ENCODE measurements at regions of chr12 and their contacts with region 1.

Region 1: GRCh38 chr12:103930034-103930786 is at the start of gene HSP90B1:
- DNase-seq: peak; percentile 97
- H3K4me3 ChIP-seq: peak within 1 kb of the TSS; percentile 95
- H3K27ac ChIP-seq: peak within 1 kb of the TSS; percentile 86 to 91
- H3K4me1 ChIP-seq: peaks cover 15 to 22% of the 10 kb centered on the region in 2 experiments
- H3K27me3 ChIP-seq: no peaks in the 10 kb centered on the region
- CTCF ChIP-seq: no peak
- EP300 ChIP-seq: peak in 1 of 2 experiments; percentile 8; a peak in 1 of 4 replicates
- RAD21 ChIP-seq: no peak
- polyA plus RNA-seq, gene HSP90B1: 420 and 482 TPM in 2 replicates

Region 2: DNA sequence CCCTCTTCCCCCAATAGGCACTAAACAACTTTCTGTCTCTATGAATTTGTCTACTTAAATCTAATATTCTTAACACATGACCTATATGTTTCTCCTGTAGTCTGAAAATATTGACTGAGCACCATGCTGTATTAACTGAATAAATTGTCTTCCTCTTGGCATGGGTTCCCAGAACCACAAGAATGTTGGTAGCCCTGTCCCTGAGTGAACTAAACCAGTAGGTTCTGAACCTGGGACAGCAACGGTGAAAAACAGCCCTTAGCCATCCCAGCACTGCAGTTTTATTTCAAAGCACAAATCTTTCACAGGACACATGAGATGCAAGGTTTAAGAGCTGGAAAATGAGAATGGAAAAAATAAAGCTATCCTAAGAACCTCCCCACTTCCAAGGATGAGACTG is 20.4 kb before region 1 on chr12:
- CTCF ChIA-PET with region 1: no interaction called
- POLR2A ChIA-PET with region 1: interaction called, 10 read pairs
- DNase-seq: no peak
- H3K4me3 ChIP-seq: no peak overlapping the region
- H3K27ac ChIP-seq: peak overlapping the region in 1 of 2 experiments; percentile 47; a peak in 1 of 4 replicates
- H3K4me1 ChIP-seq: no peaks in the 10 kb centered on the region; a peak in 2 of 4 replicates
- H3K27me3 ChIP-seq: no peaks in the 10 kb centered on the region
- CTCF ChIP-seq: no peak
- EP300 ChIP-seq: no peak
- RAD21 ChIP-seq: no peak

Region 3: GRCh38 chr12:103956516-103957027 is 26.4 kb after region 1 on chr12:
- CTCF ChIA-PET with region 1: no interaction called
- POLR2A ChIA-PET with region 1: interaction called, 16 read pairs
- DNase-seq: no peak
- H3K4me3 ChIP-seq: peak overlapping the region; percentile 78 to 87
- H3K27ac ChIP-seq: peak overlapping the region; percentile 94 to 98
- H3K4me1 ChIP-seq: peaks cover 8 to 13% of the 10 kb centered on the region in 2 experiments; a peak in 2 of 4 replicates
- H3K27me3 ChIP-seq: no peaks in the 10 kb centered on the region
- CTCF ChIP-seq: no peak
- EP300 ChIP-seq: no peak
- RAD21 ChIP-seq: no peak

Region 4: DNA sequence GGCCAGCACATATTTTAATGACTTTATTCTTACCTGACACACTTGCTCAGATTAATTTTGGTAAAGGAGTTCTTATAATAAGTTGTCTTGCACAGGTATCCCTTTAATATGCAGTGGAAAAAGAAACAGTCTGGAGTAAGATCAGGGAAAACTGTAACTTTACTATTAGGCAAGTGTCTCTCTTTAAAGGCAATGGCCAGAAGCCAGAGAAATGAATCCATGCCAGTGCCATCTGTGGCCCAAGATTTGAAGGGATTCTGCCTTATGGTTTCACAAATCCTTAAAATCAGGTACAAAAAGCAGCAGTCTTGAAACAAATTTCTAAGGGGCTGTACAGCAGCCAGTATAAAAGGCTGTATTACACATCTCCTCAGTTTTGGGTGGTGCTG is 185.4 kb after region 1 on chr12:
- CTCF ChIA-PET with region 1: no interaction called
- POLR2A ChIA-PET with region 1: no interaction called
- DNase-seq: no peak
- H3K4me3 ChIP-seq: no peak overlapping the region
- H3K27ac ChIP-seq: no peak overlapping the region
- H3K4me1 ChIP-seq: no peaks in the 10 kb centered on the region
- H3K27me3 ChIP-seq: no peaks in the 10 kb centered on the region
- CTCF ChIP-seq: no peak
- EP300 ChIP-seq: no peak
- RAD21 ChIP-seq: no peak

Measured in SK-N-SH (cell line).